ENCODE measurements at regions of chr11 and their contacts with region 1.

Region 1: GRCh38 chr11:11105358-11105757 is 247.5 kb upstream of the ZBED5 start:
- DNase-seq: no peak
- ATAC-seq: no peak
- H3K4me3 ChIP-seq: no peak overlapping the region
- H3K27ac ChIP-seq: no peak overlapping the region
- H3K4me1 ChIP-seq: no peaks in the 10 kb centered on the region
- H3K27me3 ChIP-seq: peaks cover 25% of the 10 kb centered on the region
- CTCF ChIP-seq: no peak
- POLR2A ChIP-seq: no peak
- RAD21 ChIP-seq: no peak

Region 2: DNA sequence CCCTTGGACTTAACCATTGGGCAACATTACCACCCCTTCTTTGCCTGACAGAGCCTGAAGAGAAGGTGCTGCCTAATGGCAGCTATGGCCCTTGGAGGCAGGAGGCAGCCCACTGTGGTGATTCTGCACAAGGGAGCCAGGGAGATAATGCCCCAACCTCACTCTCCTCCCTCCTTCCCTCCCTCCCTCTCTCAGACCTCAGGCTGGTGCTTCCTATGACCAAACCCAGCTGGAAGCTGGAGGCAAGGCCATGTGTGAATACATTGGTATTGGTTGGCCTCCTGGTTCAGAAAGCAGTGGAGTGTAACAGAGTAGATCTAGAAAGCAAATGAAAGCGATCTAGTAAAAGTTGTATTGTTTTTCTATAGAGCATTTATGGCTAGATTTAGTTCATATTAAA is 14.6 kb after region 1 on chr11:
- CTCF ChIA-PET with region 1: no interaction called
- POLR2A ChIA-PET with region 1: interaction called, 14 read pairs
- dilution Hi-C with region 1: no loop called
- in situ Hi-C with region 1: no loop called
- intact Hi-C with region 1: no loop called
- DNase-seq: no peak
- ATAC-seq: no peak
- H3K4me3 ChIP-seq: no peak overlapping the region
- H3K27ac ChIP-seq: no peak overlapping the region
- H3K4me1 ChIP-seq: no peaks in the 10 kb centered on the region
- H3K27me3 ChIP-seq: peaks cover 18% of the 10 kb centered on the region
- CTCF ChIP-seq: no peak
- POLR2A ChIP-seq: no peak
- RAD21 ChIP-seq: no peak